MCF 10A (cell line): ENCODE measurements at regions of chr15 and their contacts with region 1.

Region 1: GRCh38 chr15:96330450-96331145 is at the start of gene NR2F2:
- DNase-seq: peak; percentile 97
- H3K4me3 Mint-ChIP-seq: peak within 1 kb of the TSS; percentile 84
- H3K27ac Mint-ChIP-seq: peak within 1 kb of the TSS; percentile 98
- H3K4me1 Mint-ChIP-seq: peaks cover 18% of the 10 kb centered on the region
- H3K27me3 Mint-ChIP-seq: no peaks in the 10 kb centered on the region
- CTCF ChIP-seq: no peak
- total RNA-seq, gene NR2F2: 9.6 and 10.9 TPM in 2 replicates

Region 2: GRCh38 chr15:95259513-95259912 is 1071.1 kb before region 1 on chr15:
- CTCF ChIA-PET with region 1: interaction called, 16 read pairs
- POLR2A ChIA-PET with region 1: interaction called, 3 read pairs
- intact Hi-C with region 1: loop called (anchors 1 kb)
- DNase-seq: peak; percentile 77
- H3K4me3 Mint-ChIP-seq: no peak overlapping the region
- H3K27ac Mint-ChIP-seq: no peak overlapping the region
- H3K4me1 Mint-ChIP-seq: no peaks in the 10 kb centered on the region
- H3K27me3 Mint-ChIP-seq: no peaks in the 10 kb centered on the region
- CTCF ChIP-seq: peak; percentile 63

Region 3: GRCh38 chr15:95929232-95929846 is 401.3 kb before region 1 on chr15:
- CTCF ChIA-PET with region 1: no interaction called
- POLR2A ChIA-PET with region 1: no interaction called
- intact Hi-C with region 1: loop called (anchors 5 kb)
- DNase-seq: no peak
- H3K4me3 Mint-ChIP-seq: no peak overlapping the region
- H3K27ac Mint-ChIP-seq: no peak overlapping the region
- H3K4me1 Mint-ChIP-seq: no peaks in the 10 kb centered on the region
- H3K27me3 Mint-ChIP-seq: no peaks in the 10 kb centered on the region
- CTCF ChIP-seq: no peak

Region 4: GRCh38 chr15:96160269-96160668 is 170.3 kb before region 1 on chr15:
- CTCF ChIA-PET with region 1: no interaction called
- POLR2A ChIA-PET with region 1: no interaction called
- intact Hi-C with region 1: no loop called
- DNase-seq: no peak
- H3K4me3 Mint-ChIP-seq: no peak overlapping the region
- H3K27ac Mint-ChIP-seq: no peak overlapping the region
- H3K4me1 Mint-ChIP-seq: no peaks in the 10 kb centered on the region
- H3K27me3 Mint-ChIP-seq: no peaks in the 10 kb centered on the region
- CTCF ChIP-seq: no peak

Region 5: GRCh38 chr15:96273317-96274086 is 57.1 kb before region 1 on chr15:
- CTCF ChIA-PET with region 1: interaction called, 16 read pairs
- POLR2A ChIA-PET with region 1: interaction called, 16 read pairs
- intact Hi-C with region 1: loop called (anchors 5 kb)
- DNase-seq: peak; percentile 91
- H3K4me3 Mint-ChIP-seq: peak overlapping the region; percentile 4
- H3K27ac Mint-ChIP-seq: peak overlapping the region; percentile 69
- H3K4me1 Mint-ChIP-seq: peaks cover 48% of the 10 kb centered on the region
- H3K27me3 Mint-ChIP-seq: no peaks in the 10 kb centered on the region
- CTCF ChIP-seq: no peak

Region 6: GRCh38 chr15:96296264-96296663 is 34.3 kb before region 1 on chr15:
- CTCF ChIA-PET with region 1: no interaction called
- POLR2A ChIA-PET with region 1: no interaction called
- intact Hi-C with region 1: no loop called
- DNase-seq: peak; percentile 67
- H3K4me3 Mint-ChIP-seq: no peak overlapping the region
- H3K27ac Mint-ChIP-seq: no peak overlapping the region
- H3K4me1 Mint-ChIP-seq: peaks cover 8% of the 10 kb centered on the region
- H3K27me3 Mint-ChIP-seq: no peaks in the 10 kb centered on the region
- CTCF ChIP-seq: no peak

Region 7: GRCh38 chr15:96409215-96410138 is 78.9 kb after region 1 on chr15:
- CTCF ChIA-PET with region 1: no interaction called
- POLR2A ChIA-PET with region 1: no interaction called
- intact Hi-C with region 1: no loop called
- DNase-seq: no peak
- H3K4me3 Mint-ChIP-seq: no peak overlapping the region
- H3K27ac Mint-ChIP-seq: no peak overlapping the region
- H3K4me1 Mint-ChIP-seq: no peaks in the 10 kb centered on the region
- H3K27me3 Mint-ChIP-seq: peaks cover 97% of the 10 kb centered on the region
- CTCF ChIP-seq: no peak

Region 8: DNA sequence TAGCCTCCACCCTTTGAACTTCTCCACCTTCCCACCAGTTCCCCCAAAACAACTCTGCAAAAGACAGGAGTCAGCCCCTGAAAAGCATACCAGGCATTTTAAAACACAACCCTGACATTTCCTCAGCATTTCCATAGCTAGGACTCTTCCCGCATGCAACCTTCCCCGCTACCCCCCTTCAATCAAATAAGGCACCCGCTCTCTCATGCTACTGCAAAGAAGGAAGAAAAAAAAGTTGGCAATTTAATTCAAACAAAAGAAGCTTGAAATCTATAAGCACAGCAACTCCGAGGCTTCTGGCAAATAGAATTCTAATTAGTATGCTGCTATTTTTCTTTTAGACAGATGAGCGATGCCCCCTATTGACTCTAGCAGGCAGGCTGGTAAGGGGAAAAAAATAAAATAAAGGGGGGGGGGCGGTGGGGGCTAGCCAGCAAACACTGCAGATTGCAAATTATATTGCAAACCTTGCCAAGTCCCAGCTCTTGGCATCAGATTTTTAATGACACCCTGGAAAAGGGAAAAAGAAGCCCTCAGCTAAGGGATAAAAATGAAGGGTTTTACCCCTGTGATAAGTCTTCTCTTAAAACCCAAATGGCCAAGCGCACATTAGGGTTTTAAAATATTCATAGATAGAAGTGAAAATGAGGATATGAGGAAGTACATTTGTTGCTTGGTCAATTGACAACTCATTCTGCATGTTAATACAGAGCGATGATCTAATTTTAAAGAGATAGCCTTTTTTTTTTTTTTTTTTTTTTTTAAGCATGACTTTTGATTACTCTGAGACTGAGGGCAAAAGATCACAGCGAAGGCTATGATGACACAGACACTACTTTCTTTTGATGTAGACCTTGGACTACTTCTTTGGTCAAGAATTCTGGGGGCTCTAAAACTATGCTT is 255.1 kb after region 1 on chr15:
- CTCF ChIA-PET with region 1: interaction called, 10 read pairs
- POLR2A ChIA-PET with region 1: no interaction called
- intact Hi-C with region 1: no loop called
- DNase-seq: peak; percentile 8
- H3K4me3 Mint-ChIP-seq: no peak overlapping the region
- H3K27ac Mint-ChIP-seq: no peak overlapping the region
- H3K4me1 Mint-ChIP-seq: no peaks in the 10 kb centered on the region
- H3K27me3 Mint-ChIP-seq: peaks cover 87% of the 10 kb centered on the region
- CTCF ChIP-seq: no peak